Heart left ventricle (tissue), 16 donors: ENCODE measurements at regions of chrX and their contacts with region 1.

Region 1: GRCh38 chrX:40663880-40664633 is 16.7 kb upstream of the CXorf38 start:
- DNase-seq: peak in 2 of 5 donors; percentile 10 to 26
- ATAC-seq: peak in 2 of 4 donors; percentile 55 to 56
- H3K4me3 ChIP-seq: no peak overlapping the region
- H3K27ac ChIP-seq: no peak overlapping the region
- H3K4me1 ChIP-seq: no peaks in the 10 kb centered on the region
- H3K27me3 ChIP-seq: peaks cover 0 to 3% (median 0%) of the 10 kb centered on the region in 9 donors
- CTCF ChIP-seq: peak in 8 of 12 donors; percentile 6 to 42 (median 30)
- POLR2A ChIP-seq: no peak

Region 2: GRCh38 chrX:40719218-40719617 is 55.2 kb after region 1 on chrX:
- intact Hi-C with region 1: loop called in 1 of 10 experiments (anchors 10 kb)
- DNase-seq: no peak
- ATAC-seq: no peak
- H3K4me3 ChIP-seq: no peak overlapping the region
- H3K27ac ChIP-seq: no peak overlapping the region
- H3K4me1 ChIP-seq: peaks cover 0 to 2% (median 0%) of the 10 kb centered on the region in 12 donors
- H3K27me3 ChIP-seq: peaks cover 0 to 8% (median 0%) of the 10 kb centered on the region in 9 donors
- CTCF ChIP-seq: no peak
- POLR2A ChIP-seq: no peak